ENCODE measurements at regions of chr7 and their contacts with region 1.

Region 1: DNA sequence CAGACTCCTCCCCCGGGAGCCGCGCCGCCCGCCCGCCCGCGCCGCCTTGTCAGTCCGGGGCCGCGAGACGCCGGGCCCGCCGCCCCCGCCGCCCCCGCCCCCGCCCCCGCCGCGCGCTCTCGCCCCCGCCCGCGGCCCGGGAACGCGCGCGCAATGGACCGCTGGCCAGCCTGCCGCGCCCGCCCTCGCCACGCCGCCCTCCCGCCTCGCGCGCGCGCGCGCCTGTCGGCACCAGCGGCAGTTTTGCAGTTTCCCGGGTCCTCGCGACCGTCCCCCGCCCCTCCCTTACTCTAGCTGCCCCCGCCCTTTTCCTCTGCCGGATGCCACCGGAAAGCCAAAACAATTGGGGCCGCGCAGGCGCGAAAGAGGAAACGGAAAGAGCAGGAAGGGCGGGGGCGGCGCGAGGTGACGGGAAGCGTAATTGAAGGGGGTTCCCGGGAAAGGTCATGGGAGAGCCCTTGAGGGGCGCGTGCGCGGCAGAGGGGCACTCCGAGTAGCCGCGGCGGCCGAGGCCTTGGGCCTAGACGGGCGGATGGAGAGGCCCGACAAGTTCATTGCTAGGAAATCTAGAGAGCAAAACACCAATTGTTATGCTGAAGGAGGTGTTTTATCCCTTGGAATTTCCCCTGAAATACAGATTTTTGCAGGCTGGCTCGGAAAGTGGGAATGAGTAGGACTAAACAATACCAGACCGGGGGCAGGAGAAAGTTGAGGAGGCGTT is 400 bp upstream of the KBTBD2 start:
- DNase-seq: peak; percentile 95 to 96
- ATAC-seq: peak; percentile 70 to 75
- H3K4me3 ChIP-seq: peak overlapping the region; percentile 66 to 80 (median 72)
- H3K27ac ChIP-seq: peak overlapping the region; percentile 90 to 99 (median 96)
- H3K4me1 ChIP-seq: peaks cover 33 to 37% of the 10 kb centered on the region in 2 donors
- H3K27me3 ChIP-seq: no peaks in the 10 kb centered on the region
- CTCF ChIP-seq: no peak
- POLR2A ChIP-seq: peak; percentile 35 to 70

Region 2: DNA sequence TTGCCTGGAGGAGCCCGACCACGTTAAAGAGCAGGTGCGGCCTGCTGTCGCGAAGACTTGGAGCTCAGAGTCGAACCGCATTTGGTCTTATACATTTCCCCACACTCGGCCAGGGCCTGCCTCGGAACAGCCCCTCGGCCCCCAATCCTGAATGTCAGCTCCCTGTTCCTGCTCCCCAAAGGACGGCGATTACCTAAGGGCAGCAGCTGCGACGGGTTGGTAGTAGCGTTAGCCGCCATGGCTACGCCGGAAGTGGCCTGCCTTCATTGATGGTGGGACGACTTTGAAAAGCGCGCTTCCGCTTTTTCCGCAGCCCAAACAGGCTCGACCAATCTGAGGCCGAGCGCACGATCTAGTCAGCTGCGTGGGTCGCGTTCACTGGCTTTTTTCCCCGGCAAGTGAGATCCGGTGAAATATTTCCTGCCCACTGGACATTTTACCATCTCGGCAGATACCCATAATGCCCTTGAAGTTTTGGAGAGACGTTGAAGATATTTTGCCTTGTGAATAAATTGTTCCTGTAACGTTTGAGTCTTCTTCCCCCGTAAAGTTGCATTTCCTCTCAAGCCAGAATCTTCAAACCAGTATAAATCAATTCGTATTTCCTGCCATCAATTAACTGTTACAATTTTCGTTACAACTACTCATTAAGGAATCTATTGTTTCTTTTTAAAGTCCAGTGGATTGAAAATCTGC is 401.7 kb before region 1 on chr7 and contains the start of gene LSM5:
- in situ Hi-C with region 1: no loop called
- intact Hi-C with region 1: loop called (anchors 5 kb)
- DNase-seq: peak; percentile 86 to 90
- ATAC-seq: peak; percentile 93
- H3K4me3 ChIP-seq: peak within 1 kb of the TSS; percentile 71 to 84 (median 82)
- H3K27ac ChIP-seq: peak within 1 kb of the TSS; percentile 86 to 92 (median 88)
- H3K4me1 ChIP-seq: peaks cover 13 to 18% of the 10 kb centered on the region in 2 donors
- H3K27me3 ChIP-seq: no peaks in the 10 kb centered on the region
- CTCF ChIP-seq: no peak
- POLR2A ChIP-seq: peak in 1 of 2 donors; percentile 40
- total RNA-seq, gene LSM5: 11.7 to 28.7 (median 14.8) TPM

Region 3: DNA sequence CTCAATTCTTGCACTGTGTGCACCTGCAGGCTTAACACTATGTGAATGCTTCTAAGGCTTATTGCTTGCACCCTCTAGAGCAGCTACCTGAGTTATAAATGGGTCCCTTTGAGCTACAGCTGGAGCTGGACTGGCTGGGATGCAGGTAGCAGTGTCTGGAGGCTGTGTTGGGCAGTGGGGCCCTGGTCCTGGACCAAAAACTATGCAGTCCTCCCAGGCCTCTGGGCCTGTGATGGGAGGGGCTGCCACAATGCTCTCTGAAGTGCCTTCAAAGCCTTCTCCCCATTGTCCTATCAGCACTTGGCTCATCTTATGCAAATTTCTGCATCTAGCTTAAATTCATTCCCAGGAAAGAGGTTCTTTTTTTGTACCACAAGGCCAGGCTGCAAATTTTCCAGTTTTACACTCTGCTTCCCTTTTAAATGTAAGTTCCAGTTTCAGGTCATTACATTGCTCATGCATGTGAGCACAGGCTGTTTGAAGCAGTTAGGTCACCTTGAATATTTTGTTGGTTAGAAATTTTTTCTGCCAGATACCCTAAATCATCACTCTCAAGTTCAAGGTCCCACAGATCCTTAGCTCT is 26.4 kb before region 1 on chr7:
- in situ Hi-C with region 1: no loop called
- intact Hi-C with region 1: no loop called
- DNase-seq: no peak
- ATAC-seq: no peak
- H3K4me3 ChIP-seq: no peak overlapping the region
- H3K27ac ChIP-seq: no peak overlapping the region
- H3K4me1 ChIP-seq: peaks cover 13 to 44% of the 10 kb centered on the region in 2 donors
- H3K27me3 ChIP-seq: no peaks in the 10 kb centered on the region
- CTCF ChIP-seq: no peak
- POLR2A ChIP-seq: no peak

Region 4: DNA sequence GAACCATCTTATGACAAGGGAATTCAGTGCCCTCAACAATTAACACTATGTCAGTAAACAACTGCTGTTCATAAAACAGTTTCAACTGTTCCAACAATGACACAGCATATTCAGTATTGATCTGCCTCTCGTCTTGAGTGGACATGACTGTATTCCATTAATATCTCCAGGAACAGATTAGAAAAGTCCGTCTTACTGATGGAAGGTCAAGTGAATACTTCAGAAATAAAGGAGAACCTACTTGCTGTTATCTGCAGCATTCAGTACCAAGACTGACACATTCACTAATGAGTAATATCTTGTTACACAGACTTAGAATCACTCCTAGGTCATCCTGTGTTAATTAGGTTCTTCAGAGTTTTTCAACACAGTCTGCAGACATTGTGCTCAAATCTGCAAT is 12.5 kb before region 1 on chr7:
- in situ Hi-C with region 1: no loop called
- intact Hi-C with region 1: loop called (anchors 2 kb)
- DNase-seq: no peak
- ATAC-seq: peak; percentile 43 to 47
- H3K4me3 ChIP-seq: peak overlapping the region; percentile 15 to 34 (median 26)
- H3K27ac ChIP-seq: peak overlapping the region; percentile 78 to 95 (median 85)
- H3K4me1 ChIP-seq: peaks cover 94% of the 10 kb centered on the region in 2 donors
- H3K27me3 ChIP-seq: no peaks in the 10 kb centered on the region
- CTCF ChIP-seq: no peak
- POLR2A ChIP-seq: no peak

Region 5: GRCh38 chr7:32957326-32958045 is 65.5 kb after region 1 on chr7 and contains the start of gene FKBP9:
- in situ Hi-C with region 1: no loop called
- intact Hi-C with region 1: loop called (anchors 5 kb)
- DNase-seq: peak; percentile 59 to 68
- ATAC-seq: peak; percentile 83 to 84
- H3K4me3 ChIP-seq: peak within 1 kb of the TSS; percentile 72 to 97 (median 84)
- H3K27ac ChIP-seq: peak within 1 kb of the TSS; percentile 76 to 93 (median 88)
- H3K4me1 ChIP-seq: peaks cover 8 to 16% of the 10 kb centered on the region in 2 donors
- H3K27me3 ChIP-seq: no peaks in the 10 kb centered on the region
- CTCF ChIP-seq: no peak
- POLR2A ChIP-seq: peak; percentile 44 to 59
- total RNA-seq, gene FKBP9: 32.1 to 72.1 (median 35.3) TPM

Region 6: GRCh38 chr7:33062782-33063443 is 171.0 kb after region 1 on chr7:
- in situ Hi-C with region 1: no loop called
- intact Hi-C with region 1: loop called (anchors 2 kb)
- DNase-seq: peak; percentile 87 to 88
- ATAC-seq: peak; percentile 96
- H3K4me3 ChIP-seq: peak overlapping the region; percentile 74 to 97 (median 75)
- H3K27ac ChIP-seq: peak overlapping the region; percentile 90 to 98 (median 94)
- H3K4me1 ChIP-seq: peaks cover 22 to 30% of the 10 kb centered on the region in 2 donors
- H3K27me3 ChIP-seq: no peaks in the 10 kb centered on the region
- CTCF ChIP-seq: no peak
- POLR2A ChIP-seq: peak in 1 of 2 donors; percentile 53

Region 7: GRCh38 chr7:33418251-33418701 is 526.3 kb after region 1 on chr7:
- in situ Hi-C with region 1: no loop called
- intact Hi-C with region 1: no loop called
- DNase-seq: no peak
- ATAC-seq: no peak
- H3K4me3 ChIP-seq: no peak overlapping the region
- H3K27ac ChIP-seq: no peak overlapping the region
- H3K4me1 ChIP-seq: no peaks in the 10 kb centered on the region
- H3K27me3 ChIP-seq: no peaks in the 10 kb centered on the region
- CTCF ChIP-seq: no peak
- POLR2A ChIP-seq: no peak